Right lobe of liver (tissue), 6 donors: ENCODE measurements at regions of chr11 and their contacts with region 1.

Region 1: DNA sequence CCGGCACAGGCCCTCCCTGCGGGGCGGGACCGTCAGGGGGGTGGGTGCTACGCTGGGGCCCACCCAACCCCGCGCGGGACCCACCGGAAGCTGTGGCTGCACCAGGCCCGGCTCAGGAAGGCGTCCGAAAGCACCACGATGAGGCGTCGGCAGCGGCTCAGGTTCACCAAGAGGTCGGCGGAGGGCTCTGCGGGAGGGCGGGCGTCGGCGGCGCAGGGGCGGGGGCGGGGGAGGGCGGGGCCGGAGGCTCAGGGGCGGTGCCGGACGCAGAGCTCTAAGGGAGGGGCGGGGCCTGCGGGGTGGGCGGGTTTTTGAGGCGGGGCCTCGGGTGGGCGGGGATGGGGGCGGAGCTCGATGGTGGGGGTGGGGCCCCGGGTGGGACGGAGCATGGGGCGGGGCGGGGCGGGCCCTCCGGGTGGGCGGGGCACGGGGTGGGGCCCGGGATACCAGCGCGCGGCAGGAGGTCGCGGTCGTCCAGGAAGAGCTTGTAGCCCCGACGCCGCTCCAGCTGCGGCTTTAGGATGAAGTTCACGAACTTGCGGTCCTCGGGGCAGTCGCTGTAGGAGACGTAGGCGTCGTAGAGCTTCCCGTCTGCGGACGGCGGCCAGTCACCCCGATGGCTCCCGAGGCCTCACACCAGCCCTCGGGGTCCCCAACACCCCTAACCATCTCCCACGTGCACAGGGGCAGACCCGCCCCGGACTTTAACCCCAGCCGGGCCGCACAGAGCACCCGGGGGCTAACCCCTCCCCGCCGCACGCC is 7.6 kb downstream of the SIGIRR start:
- DNase-seq: peak; percentile 92 to 94 (median 94)
- ATAC-seq: peak; percentile 60 to 67 (median 64)
- H3K4me3 ChIP-seq: peak overlapping the region; percentile 59 to 70 (median 66)
- H3K27ac ChIP-seq: peak overlapping the region; percentile 64 to 77 (median 64)
- H3K4me1 ChIP-seq: peaks cover 0 to 41% (median 18%) of the 10 kb centered on the region in 4 donors
- H3K27me3 ChIP-seq: no peaks in the 10 kb centered on the region
- CTCF ChIP-seq: peak in 1 of 4 donors; percentile 3
- POLR2A ChIP-seq: no peak

Region 2: GRCh38 chr11:441418-442274 is 34.5 kb after region 1 on chr11 and contains the start of gene ANO9:
- intact Hi-C with region 1: loop called in 1 of 2 experiments (anchors 5 kb)
- DNase-seq: peak in 2 of 3 donors; percentile 44 to 54
- ATAC-seq: peak in 1 of 4 donors; percentile 28
- H3K4me3 ChIP-seq: peak within 1 kb of the TSS in 1 of 3 donors; percentile 4
- H3K27ac ChIP-seq: no peak within 1 kb of the TSS
- H3K4me1 ChIP-seq: peaks cover 0 to 8% (median 0%) of the 10 kb centered on the region in 4 donors
- H3K27me3 ChIP-seq: no peaks in the 10 kb centered on the region
- CTCF ChIP-seq: no peak
- POLR2A ChIP-seq: no peak
- total RNA-seq, gene ANO9: 0.09 to 1.0 (median 0.28) TPM in 5 of 6 experiments, not detected in the other

Region 3: GRCh38 chr11:449880-450808 is 43.0 kb after region 1 on chr11 and contains the start of gene PTDSS2:
- intact Hi-C with region 1: loop called in 1 of 2 experiments (anchors 10 kb)
- DNase-seq: peak; percentile 96 to 97 (median 97)
- ATAC-seq: peak; percentile 84 to 87 (median 85)
- H3K4me3 ChIP-seq: peak within 1 kb of the TSS; percentile 98 to 100 (median 99)
- H3K27ac ChIP-seq: peak within 1 kb of the TSS; percentile 69 to 91 (median 85)
- H3K4me1 ChIP-seq: peaks cover 0 to 30% (median 11%) of the 10 kb centered on the region in 4 donors
- H3K27me3 ChIP-seq: no peaks in the 10 kb centered on the region
- CTCF ChIP-seq: no peak
- POLR2A ChIP-seq: peak; percentile 63
- total RNA-seq, gene PTDSS2: 8.4 to 21.9 (median 11.4) TPM

Region 4: DNA sequence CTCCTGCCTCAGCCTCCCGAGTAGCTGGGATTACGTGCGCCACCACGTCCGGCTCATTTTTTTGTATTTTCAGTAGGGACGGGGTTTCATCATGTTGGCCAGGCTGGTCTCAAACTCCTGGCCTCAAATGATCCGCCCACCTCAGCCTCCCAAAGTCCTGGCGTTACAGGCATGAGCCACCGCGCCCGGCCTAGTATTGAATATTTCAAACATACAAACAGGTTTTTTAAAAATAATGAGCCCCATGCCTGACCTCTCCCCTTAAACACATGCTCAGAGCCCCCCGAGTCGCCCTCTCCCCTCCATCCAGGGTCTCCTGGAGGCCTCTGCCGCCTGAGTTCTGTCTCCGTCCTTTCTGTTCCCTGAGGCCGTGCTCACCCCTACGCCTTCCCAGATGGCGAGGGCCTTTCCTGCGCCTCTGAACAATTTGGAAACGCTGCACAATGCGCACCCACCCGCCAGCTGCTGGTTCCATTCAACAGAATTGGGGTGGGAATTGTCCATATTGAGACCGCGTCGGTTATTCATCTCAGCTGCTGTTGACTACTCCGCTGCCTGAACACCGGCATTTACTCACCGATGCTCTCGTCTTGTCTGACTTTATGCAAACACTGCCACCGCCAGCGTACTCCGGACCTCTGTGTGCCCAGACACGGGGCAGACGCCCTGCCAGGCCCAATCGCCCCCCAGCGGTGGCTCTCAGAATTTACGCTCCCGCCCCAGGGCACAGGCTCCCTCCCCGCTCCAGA is 113.4 kb after region 1 on chr11:
- intact Hi-C with region 1: loop called in 1 of 2 experiments (anchors 10 kb)
- DNase-seq: no peak
- ATAC-seq: no peak
- H3K4me3 ChIP-seq: no peak overlapping the region
- H3K27ac ChIP-seq: no peak overlapping the region
- H3K4me1 ChIP-seq: peaks cover 0 to 5% (median 0%) of the 10 kb centered on the region in 4 donors
- H3K27me3 ChIP-seq: no peaks in the 10 kb centered on the region
- CTCF ChIP-seq: peak in 1 of 4 donors; percentile 4
- POLR2A ChIP-seq: no peak